ENCODE measurements at regions of chr1 and their contacts with region 1.

Region 1: DNA sequence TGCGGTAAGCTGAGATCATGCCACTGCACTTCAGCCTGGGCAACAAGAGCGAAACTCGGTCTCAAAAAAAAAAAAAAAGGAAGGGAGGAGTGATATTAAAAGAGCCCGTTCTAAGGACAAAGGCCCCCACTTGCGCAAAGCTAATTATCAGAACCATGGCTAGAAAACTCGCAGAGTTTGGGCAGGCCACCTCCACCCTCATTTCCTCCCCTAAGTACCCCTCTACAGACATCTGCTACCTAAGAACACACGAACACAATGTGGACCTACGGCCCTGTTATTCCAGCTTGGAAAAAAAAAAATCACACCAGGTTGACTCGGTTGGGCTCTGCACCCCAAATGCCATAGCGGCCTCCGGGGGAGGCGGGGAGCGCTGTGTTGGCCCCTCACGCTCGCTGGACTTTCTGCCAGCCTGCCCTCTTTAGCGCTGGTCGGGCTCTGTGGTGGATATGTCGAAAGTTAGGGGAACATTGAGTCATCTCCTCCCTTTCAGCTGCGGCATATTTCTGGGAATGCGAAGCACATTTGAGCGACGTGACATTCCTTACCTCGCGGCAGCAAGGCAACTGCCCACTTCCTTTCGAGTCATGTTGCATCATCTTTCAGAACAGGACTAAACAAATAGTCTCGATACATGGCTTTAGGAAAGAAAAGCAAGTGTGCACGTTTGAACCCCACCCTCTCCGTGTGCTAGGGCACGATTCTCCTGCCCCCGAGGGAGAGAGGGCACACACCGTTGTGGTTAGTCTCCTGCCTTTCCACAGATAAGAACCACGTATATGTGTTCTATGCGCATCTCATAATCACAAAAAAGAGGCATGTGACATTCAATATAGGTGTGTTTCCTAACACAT is 106.1 kb upstream of the SLC45A1 start:
- DNase-seq: no peak
- ATAC-seq: peak; percentile 23 to 80 (median 50)
- H3K4me3 ChIP-seq: peak overlapping the region in 1 of 10 donors; percentile 7
- H3K27ac ChIP-seq: peak overlapping the region in 1 of 10 donors; percentile 90
- H3K4me1 ChIP-seq: peaks cover 0 to 64% (median 17%) of the 10 kb centered on the region in 9 donors
- H3K27me3 ChIP-seq: peaks cover 0 to 14% (median 5%) of the 10 kb centered on the region in 7 donors
- CTCF ChIP-seq: no peak

Region 2: GRCh38 chr1:7885513-7886404 is 326.1 kb before region 1 on chr1:
- intact Hi-C with region 1: no loop called
- DNase-seq: no peak
- ATAC-seq: no peak
- H3K4me3 ChIP-seq: no peak overlapping the region
- H3K27ac ChIP-seq: no peak overlapping the region
- H3K4me1 ChIP-seq: no peaks in the 10 kb centered on the region
- H3K27me3 ChIP-seq: peaks cover 0 to 53% (median 36%) of the 10 kb centered on the region in 7 donors
- CTCF ChIP-seq: no peak

Region 3: GRCh38 chr1:8055973-8056372 is 155.8 kb before region 1 on chr1:
- intact Hi-C with region 1: loop called in 1 of 10 experiments (anchors 10 kb)
- DNase-seq: no peak
- ATAC-seq: no peak
- H3K4me3 ChIP-seq: no peak overlapping the region
- H3K27ac ChIP-seq: no peak overlapping the region
- H3K4me1 ChIP-seq: peaks cover 0 to 4% (median 0%) of the 10 kb centered on the region in 9 donors
- H3K27me3 ChIP-seq: no peaks in the 10 kb centered on the region
- CTCF ChIP-seq: no peak

Region 4: GRCh38 chr1:8232036-8232757 is 20.4 kb after region 1 on chr1:
- intact Hi-C with region 1: no loop called
- DNase-seq: no peak
- ATAC-seq: no peak
- H3K4me3 ChIP-seq: no peak overlapping the region
- H3K27ac ChIP-seq: no peak overlapping the region
- H3K4me1 ChIP-seq: no peaks in the 10 kb centered on the region
- H3K27me3 ChIP-seq: peaks cover 0 to 21% (median 12%) of the 10 kb centered on the region in 7 donors
- CTCF ChIP-seq: no peak

Measured in heart right ventricle (tissue), 16 donors.